Activated T-helper 1 cell treated with anti-CD3 and anti-CD28 coated beads, Interleukin-12 subunit alpha, Interleukin-12 subunit beta, Interleukin-2, Interleukin-4 antibody, amounts not matched to agents 30 ng/mL and 10 ng/mL and 1 ng/mL, durations not matched to agents 14 hours and 24 hours and 36 hours (primary cell): ENCODE measurements at regions of chr2 and their contacts with region 1.

Region 1: GRCh38 chr2:203763938-203764664 is 57.7 kb downstream of the CD28 start:
- DNase-seq: peak; percentile 20
- H3K4me3 Mint-ChIP-seq: peak overlapping the region; percentile 22
- H3K27ac Mint-ChIP-seq: peak overlapping the region; percentile 95
- H3K4me1 Mint-ChIP-seq: peaks cover 66% of the 10 kb centered on the region
- H3K27me3 Mint-ChIP-seq: no peaks in the 10 kb centered on the region

Region 2: GRCh38 chr2:203446071-203446481 is 318.0 kb before region 1 on chr2:
- intact Hi-C with region 1: no loop called
- DNase-seq: no peak
- H3K4me3 Mint-ChIP-seq: no peak overlapping the region
- H3K27ac Mint-ChIP-seq: peak overlapping the region; percentile 14
- H3K4me1 Mint-ChIP-seq: peaks cover 15% of the 10 kb centered on the region
- H3K27me3 Mint-ChIP-seq: no peaks in the 10 kb centered on the region

Region 3: GRCh38 chr2:203718087-203718486 is 46.0 kb before region 1 on chr2:
- intact Hi-C with region 1: loop called (anchors 1 kb)
- DNase-seq: peak; percentile 67
- H3K4me3 Mint-ChIP-seq: peak overlapping the region; percentile 73
- H3K27ac Mint-ChIP-seq: peak overlapping the region; percentile 96
- H3K4me1 Mint-ChIP-seq: peaks cover 96% of the 10 kb centered on the region
- H3K27me3 Mint-ChIP-seq: no peaks in the 10 kb centered on the region

Region 4: DNA sequence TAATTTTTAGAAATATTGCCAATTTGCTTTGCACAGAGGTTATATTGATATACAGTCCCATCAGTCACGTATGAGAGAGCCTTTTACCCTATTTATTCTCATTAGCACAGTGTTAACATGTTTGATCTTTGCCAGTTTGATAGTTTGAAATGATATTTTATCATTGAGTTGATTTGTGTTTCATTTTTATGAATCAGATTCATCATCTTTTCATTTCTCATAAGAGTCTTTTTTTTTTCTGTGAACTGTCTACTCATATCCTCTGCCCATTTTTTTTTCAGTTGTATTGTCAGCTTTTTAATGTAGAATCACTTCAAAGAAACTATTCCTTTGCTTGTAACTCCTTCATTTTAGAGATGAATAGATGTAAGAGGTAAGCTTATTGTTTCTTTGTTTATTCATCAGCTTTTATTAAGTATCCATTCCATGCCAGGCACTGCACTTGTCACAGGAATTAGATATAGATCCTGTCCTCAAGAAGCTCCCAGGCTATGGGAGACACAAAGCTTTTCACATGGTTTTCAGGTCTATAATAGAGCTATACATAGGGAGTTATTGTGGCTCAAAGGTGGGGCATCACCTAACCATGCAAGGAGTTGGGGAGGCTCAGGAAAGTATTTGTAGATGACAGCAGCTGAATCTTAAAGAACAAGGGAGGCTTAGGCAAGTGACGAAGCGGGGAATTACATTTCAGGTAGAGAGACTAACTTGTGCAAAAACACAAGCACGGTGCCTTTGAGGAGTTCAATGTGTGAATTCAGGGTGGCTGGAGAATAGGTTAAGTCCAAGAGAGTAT is 15.6 kb before region 1 on chr2:
- intact Hi-C with region 1: loop called (anchors 1 kb)
- DNase-seq: no peak
- H3K4me3 Mint-ChIP-seq: peak overlapping the region; percentile 10
- H3K27ac Mint-ChIP-seq: peak overlapping the region; percentile 81
- H3K4me1 Mint-ChIP-seq: peaks cover 65% of the 10 kb centered on the region
- H3K27me3 Mint-ChIP-seq: no peaks in the 10 kb centered on the region

Region 5: GRCh38 chr2:203782262-203782976 is 18.3 kb after region 1 on chr2:
- intact Hi-C with region 1: loop called (anchors 1 kb)
- DNase-seq: peak; percentile 50
- H3K4me3 Mint-ChIP-seq: no peak overlapping the region
- H3K27ac Mint-ChIP-seq: peak overlapping the region; percentile 92
- H3K4me1 Mint-ChIP-seq: peaks cover 63% of the 10 kb centered on the region
- H3K27me3 Mint-ChIP-seq: no peaks in the 10 kb centered on the region